Left cardiac atrium (tissue), 4 donors: ENCODE measurements at regions of chr2 and their contacts with region 1.

Region 1: GRCh38 chr2:188853307-188853706 is 120.9 kb upstream of the COL3A1 start:
- DNase-seq: no peak
- ATAC-seq: no peak

Region 2: GRCh38 chr2:188668017-188668680 is 185.2 kb before region 1 on chr2:
- intact Hi-C with region 1: no loop called
- DNase-seq: no peak
- ATAC-seq: peak in 1 of 2 donors; percentile 53

Region 3: DNA sequence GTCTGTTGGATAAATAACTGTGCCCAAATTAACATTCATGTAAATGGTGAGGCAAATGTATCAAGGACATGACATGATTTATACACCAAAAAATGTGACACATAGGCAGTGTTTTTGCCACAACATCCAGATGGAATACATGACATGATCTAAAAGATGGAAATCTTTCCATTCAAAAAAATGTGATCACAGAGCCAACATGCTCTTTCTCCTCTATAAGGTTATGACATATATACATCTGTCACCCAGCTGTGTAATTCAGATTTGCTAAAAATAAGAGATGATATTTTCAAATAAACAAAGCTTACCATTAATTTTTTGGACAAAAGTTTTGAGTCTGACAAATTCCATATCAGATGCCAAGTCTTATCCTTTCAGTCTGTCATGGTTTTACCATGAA is 25.4 kb after region 1 on chr2:
- intact Hi-C with region 1: loop called in 1 of 2 experiments (anchors 2 kb)
- DNase-seq: no peak
- ATAC-seq: no peak

Region 4: DNA sequence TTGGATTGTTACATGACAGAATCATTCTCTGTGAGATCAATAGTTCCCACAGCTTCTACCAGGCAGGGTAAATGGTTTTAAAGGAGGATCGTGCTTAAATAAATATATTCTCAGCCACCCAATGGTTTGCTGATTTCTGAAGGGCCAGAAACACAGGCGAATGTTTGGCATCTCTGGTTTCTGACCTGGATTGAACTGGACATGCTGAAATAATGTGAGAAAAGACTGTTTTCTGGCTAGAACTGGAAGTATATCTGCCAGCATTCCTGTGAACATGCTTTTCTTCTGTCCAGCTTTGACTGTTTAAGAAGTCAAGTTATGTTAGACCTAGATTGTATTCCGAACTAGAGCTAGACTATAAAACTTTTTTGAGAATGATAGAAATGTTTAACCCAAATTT is 43.8 kb after region 1 on chr2:
- intact Hi-C with region 1: no loop called
- DNase-seq: no peak
- ATAC-seq: peak; percentile 76 to 88